ENCODE measurements at regions of chr17 and their contacts with region 1.

Region 1: GRCh38 chr17:28252436-28252835 is 66.6 kb upstream of the TMEM97 start:
- DNase-seq: no peak
- H3K4me3 ChIP-seq: no peak overlapping the region
- H3K27ac ChIP-seq: no peak overlapping the region
- H3K4me1 ChIP-seq: peaks cover 0 to 3% of the 10 kb centered on the region in 2 experiments; a peak in 1 of 4 replicates
- H3K27me3 ChIP-seq: no peaks in the 10 kb centered on the region
- CTCF ChIP-seq: no peak
- EP300 ChIP-seq: no peak
- RAD21 ChIP-seq: no peak

Region 2: GRCh38 chr17:27892866-27893769 is 359.3 kb before region 1 on chr17 and contains the start of gene LYRM9:
- CTCF ChIA-PET with region 1: interaction called, 30 read pairs
- POLR2A ChIA-PET with region 1: no interaction called
- DNase-seq: peak; percentile 98
- H3K4me3 ChIP-seq: peak within 1 kb of the TSS; percentile 63 to 70
- H3K27ac ChIP-seq: peak within 1 kb of the TSS; percentile 41 to 77; a peak in 2 of 4 replicates
- H3K4me1 ChIP-seq: peaks cover 0 to 5% of the 10 kb centered on the region in 2 experiments; a peak in 2 of 4 replicates
- H3K27me3 ChIP-seq: no peaks in the 10 kb centered on the region
- CTCF ChIP-seq: peak; percentile 91
- EP300 ChIP-seq: no peak
- RAD21 ChIP-seq: peak; percentile 44
- polyA plus RNA-seq, gene LYRM9: 4.6 and 5.7 TPM in 2 replicates

Region 3: GRCh38 chr17:28112220-28113005 is 140.0 kb before region 1 on chr17:
- CTCF ChIA-PET with region 1: no interaction called
- POLR2A ChIA-PET with region 1: no interaction called
- DNase-seq: no peak
- H3K4me3 ChIP-seq: no peak overlapping the region
- H3K27ac ChIP-seq: peak overlapping the region in 1 of 2 experiments; percentile 65; a peak in 2 of 4 replicates
- H3K4me1 ChIP-seq: peaks cover 4 to 21% of the 10 kb centered on the region in 2 experiments; a peak in 3 of 4 replicates
- H3K27me3 ChIP-seq: no peaks in the 10 kb centered on the region
- CTCF ChIP-seq: no peak
- EP300 ChIP-seq: no peak
- RAD21 ChIP-seq: no peak

Region 4: DNA sequence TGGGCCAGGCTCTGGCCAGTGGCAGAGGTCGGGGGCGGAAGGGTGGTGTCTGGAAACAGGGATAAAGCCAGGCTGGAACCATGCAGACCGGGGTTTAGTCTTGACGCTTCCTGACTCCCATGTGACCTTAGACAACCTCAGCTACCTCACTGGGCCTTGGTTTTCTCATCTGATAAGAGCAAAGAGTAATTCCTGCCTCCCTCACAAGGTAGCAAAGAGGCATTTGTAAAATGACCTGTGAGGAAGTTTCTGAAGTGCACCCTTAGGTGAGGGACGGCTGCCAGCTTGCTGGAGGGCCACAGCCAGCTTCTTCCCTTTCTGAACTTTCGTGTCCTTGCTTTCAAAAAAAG is 11.5 kb before region 1 on chr17:
- CTCF ChIA-PET with region 1: interaction called, 93 read pairs
- POLR2A ChIA-PET with region 1: no interaction called
- DNase-seq: no peak
- H3K4me3 ChIP-seq: no peak overlapping the region
- H3K27ac ChIP-seq: no peak overlapping the region
- H3K4me1 ChIP-seq: no peaks in the 10 kb centered on the region; a peak in 1 of 4 replicates
- H3K27me3 ChIP-seq: no peaks in the 10 kb centered on the region; the same call in 1 of the 2 replicates
- CTCF ChIP-seq: no peak
- EP300 ChIP-seq: no peak
- RAD21 ChIP-seq: no peak

Region 5: GRCh38 chr17:28272166-28272565 is 19.7 kb after region 1 on chr17:
- CTCF ChIA-PET with region 1: interaction called, 18 read pairs
- POLR2A ChIA-PET with region 1: no interaction called
- DNase-seq: no peak
- H3K4me3 ChIP-seq: no peak overlapping the region
- H3K27ac ChIP-seq: no peak overlapping the region
- H3K4me1 ChIP-seq: no peaks in the 10 kb centered on the region; a peak in 1 of 4 replicates
- H3K27me3 ChIP-seq: peaks cover 11% of the 10 kb centered on the region; the same call in 1 of the 2 replicates
- CTCF ChIP-seq: no peak
- EP300 ChIP-seq: no peak
- RAD21 ChIP-seq: no peak

Region 6: GRCh38 chr17:28318759-28319660 is 66.6 kb after region 1 on chr17 and contains the start of gene TMEM97:
- CTCF ChIA-PET with region 1: interaction called, 15 read pairs
- POLR2A ChIA-PET with region 1: no interaction called
- DNase-seq: peak; percentile 96
- H3K4me3 ChIP-seq: peak within 1 kb of the TSS; percentile 64 to 66
- H3K27ac ChIP-seq: peak within 1 kb of the TSS; percentile 25 to 72; a peak in 3 of 4 replicates
- H3K4me1 ChIP-seq: peaks cover 7 to 14% of the 10 kb centered on the region in 2 experiments; a peak in 1 of 4 replicates
- H3K27me3 ChIP-seq: no peaks in the 10 kb centered on the region
- CTCF ChIP-seq: 0 out of 2 replicates have a peak, but pooled peaks have one; percentile 22
- EP300 ChIP-seq: no peak
- RAD21 ChIP-seq: no peak
- polyA plus RNA-seq, gene TMEM97: 8.6 and 11.4 TPM in 2 replicates